ENCODE measurements at regions of chr3 and their contacts with region 1.

Region 1: DNA sequence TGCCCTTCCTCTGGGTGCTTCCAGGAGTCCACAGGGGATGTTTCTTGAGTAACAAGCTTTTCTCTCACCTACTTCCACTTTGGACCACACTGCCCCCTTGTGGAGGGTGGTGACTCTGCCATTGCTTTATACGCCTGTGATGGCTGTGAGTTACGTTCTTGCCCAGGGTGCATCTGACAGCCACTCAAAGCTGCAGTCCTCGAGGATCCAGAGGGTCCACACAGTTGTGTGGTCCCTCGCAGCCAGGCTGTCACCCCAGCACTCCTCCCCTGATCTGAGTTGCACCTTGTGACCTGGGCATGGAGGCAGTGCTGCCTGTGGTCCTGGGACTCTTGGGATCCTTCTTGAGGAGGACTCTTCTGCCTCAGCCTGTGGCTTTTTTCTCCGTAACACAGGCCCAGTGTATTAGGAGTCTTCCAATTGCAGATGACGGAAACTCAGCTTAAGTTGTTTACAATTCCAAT is 23.4 kb downstream of the FOXL2 start:
- DNase-seq: peak; percentile 73 to 79 (median 78)
- H3K4me3 ChIP-seq: no peak overlapping the region
- H3K4me3 Mint-ChIP-seq: peak overlapping the region in 1 of 8 donors; percentile 53
- H3K27ac ChIP-seq: no peak overlapping the region
- H3K27ac Mint-ChIP-seq: peak overlapping the region in 1 of 7 donors; percentile 7
- H3K4me1 ChIP-seq: no peaks in the 10 kb centered on the region
- H3K4me1 Mint-ChIP-seq: peaks cover 0 to 1% (median under 1%) of the 10 kb centered on the region in 4 donors
- H3K27me3 ChIP-seq: peaks cover 3% of the 10 kb centered on the region
- H3K27me3 Mint-ChIP-seq: peaks cover 4 to 11% of the 10 kb centered on the region in 2 donors

Region 2: DNA sequence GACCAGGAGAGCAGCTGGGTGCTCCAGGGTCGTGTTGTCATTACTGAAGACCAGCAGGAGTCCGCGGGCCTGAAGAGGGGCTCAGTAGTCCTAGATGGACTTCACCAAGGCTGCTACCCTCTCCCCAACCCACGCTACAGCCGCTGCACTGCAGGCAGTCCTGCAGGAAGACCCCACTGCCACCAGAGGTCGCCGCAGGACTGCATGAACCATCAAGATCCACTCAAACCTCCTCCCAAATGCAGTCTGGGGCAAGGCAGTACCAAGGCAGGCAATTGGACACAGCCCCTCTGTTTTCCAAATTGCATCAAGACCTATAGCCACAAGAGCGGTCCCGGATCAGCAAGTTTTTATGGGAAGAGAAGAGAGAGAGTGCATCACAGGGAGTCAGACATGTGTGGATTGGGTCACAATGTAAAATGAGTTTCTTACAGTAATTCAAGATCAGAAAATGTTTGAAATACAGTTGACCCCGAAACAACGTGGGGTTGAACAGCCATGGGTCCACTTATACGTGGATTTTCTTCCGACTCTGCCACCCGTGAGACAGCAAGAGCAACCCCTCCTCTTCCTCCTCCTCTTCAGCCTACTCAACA is 854.9 kb before region 1 on chr3:
- CTCF ChIA-PET with region 1: interaction called, 8 read pairs
- POLR2A ChIA-PET with region 1: no interaction called
- intact Hi-C with region 1: loop called (anchors 2 kb)
- DNase-seq: peak; percentile 54 to 61 (median 59)
- H3K4me3 ChIP-seq: no peak overlapping the region
- H3K4me3 Mint-ChIP-seq: no peak overlapping the region
- H3K27ac ChIP-seq: no peak overlapping the region
- H3K27ac Mint-ChIP-seq: no peak overlapping the region
- H3K4me1 ChIP-seq: no peaks in the 10 kb centered on the region
- H3K4me1 Mint-ChIP-seq: no peaks in the 10 kb centered on the region
- H3K27me3 ChIP-seq: no peaks in the 10 kb centered on the region
- H3K27me3 Mint-ChIP-seq: peaks cover 7 to 16% of the 10 kb centered on the region in 2 donors

Region 3: GRCh38 chr3:138284957-138285477 is 638.5 kb before region 1 on chr3:
- CTCF ChIA-PET with region 1: no interaction called
- POLR2A ChIA-PET with region 1: no interaction called
- intact Hi-C with region 1: no loop called
- DNase-seq: no peak
- H3K4me3 ChIP-seq: no peak overlapping the region
- H3K4me3 Mint-ChIP-seq: no peak overlapping the region
- H3K27ac ChIP-seq: no peak overlapping the region
- H3K27ac Mint-ChIP-seq: no peak overlapping the region
- H3K4me1 ChIP-seq: no peaks in the 10 kb centered on the region
- H3K4me1 Mint-ChIP-seq: peaks cover 0 to 8% (median 3%) of the 10 kb centered on the region in 4 donors
- H3K27me3 ChIP-seq: no peaks in the 10 kb centered on the region
- H3K27me3 Mint-ChIP-seq: no peaks in the 10 kb centered on the region

Region 4: GRCh38 chr3:138417559-138417982 is 506.0 kb before region 1 on chr3:
- CTCF ChIA-PET with region 1: interaction called, 64 read pairs
- POLR2A ChIA-PET with region 1: no interaction called
- intact Hi-C with region 1: loop called (anchors 1 kb)
- DNase-seq: peak; percentile 38 to 52 (median 40)
- H3K4me3 ChIP-seq: no peak overlapping the region
- H3K4me3 Mint-ChIP-seq: no peak overlapping the region
- H3K27ac ChIP-seq: no peak overlapping the region
- H3K27ac Mint-ChIP-seq: no peak overlapping the region
- H3K4me1 ChIP-seq: no peaks in the 10 kb centered on the region
- H3K4me1 Mint-ChIP-seq: no peaks in the 10 kb centered on the region
- H3K27me3 ChIP-seq: no peaks in the 10 kb centered on the region
- H3K27me3 Mint-ChIP-seq: peaks cover 5 to 14% of the 10 kb centered on the region in 2 donors

Region 5: DNA sequence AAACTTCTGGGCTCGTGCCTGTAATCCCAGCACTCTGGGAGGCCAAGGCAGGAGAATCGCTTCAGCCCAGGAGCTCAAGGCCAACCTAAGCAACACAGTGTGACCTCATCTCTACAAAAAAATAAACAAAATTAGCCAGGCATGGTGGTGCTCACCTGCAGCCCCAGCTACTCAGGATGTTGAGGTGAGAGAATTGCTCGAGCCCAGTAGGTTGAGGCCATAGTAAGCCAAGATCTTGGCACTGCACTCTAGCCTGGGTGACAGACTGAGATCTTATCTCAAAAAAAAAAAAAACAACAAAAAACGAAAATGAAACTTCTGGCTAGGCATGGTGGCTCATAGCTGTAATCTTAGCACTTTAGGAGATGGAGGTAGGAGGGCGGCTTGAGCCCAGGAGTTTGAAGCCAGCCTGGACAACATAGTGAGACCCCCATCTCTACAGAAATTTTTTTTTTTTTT is 142.5 kb before region 1 on chr3:
- CTCF ChIA-PET with region 1: interaction called, 10 read pairs
- POLR2A ChIA-PET with region 1: no interaction called
- intact Hi-C with region 1: no loop called
- DNase-seq: peak; percentile 73 to 87 (median 83)
- H3K4me3 ChIP-seq: peak overlapping the region in 1 of 2 donors; percentile 22
- H3K4me3 Mint-ChIP-seq: peak overlapping the region; percentile 46 to 81 (median 70)
- H3K27ac ChIP-seq: peak overlapping the region; percentile 48
- H3K27ac Mint-ChIP-seq: peak overlapping the region; percentile 86 to 94 (median 92)
- H3K4me1 ChIP-seq: peaks cover 22% of the 10 kb centered on the region
- H3K4me1 Mint-ChIP-seq: peaks cover 20 to 46% (median 29%) of the 10 kb centered on the region in 4 donors
- H3K27me3 ChIP-seq: no peaks in the 10 kb centered on the region
- H3K27me3 Mint-ChIP-seq: no peaks in the 10 kb centered on the region

Region 6: GRCh38 chr3:138962854-138963560 is 39.4 kb after region 1 on chr3:
- CTCF ChIA-PET with region 1: no interaction called
- POLR2A ChIA-PET with region 1: no interaction called
- intact Hi-C with region 1: no loop called
- DNase-seq: no peak
- H3K4me3 ChIP-seq: no peak overlapping the region
- H3K4me3 Mint-ChIP-seq: no peak overlapping the region
- H3K27ac ChIP-seq: no peak overlapping the region
- H3K27ac Mint-ChIP-seq: no peak overlapping the region
- H3K4me1 ChIP-seq: peaks cover 10% of the 10 kb centered on the region
- H3K4me1 Mint-ChIP-seq: peaks cover 0 to 16% (median 6%) of the 10 kb centered on the region in 4 donors
- H3K27me3 ChIP-seq: peaks cover 13% of the 10 kb centered on the region
- H3K27me3 Mint-ChIP-seq: peaks cover 25 to 57% of the 10 kb centered on the region in 2 donors

Region 7: DNA sequence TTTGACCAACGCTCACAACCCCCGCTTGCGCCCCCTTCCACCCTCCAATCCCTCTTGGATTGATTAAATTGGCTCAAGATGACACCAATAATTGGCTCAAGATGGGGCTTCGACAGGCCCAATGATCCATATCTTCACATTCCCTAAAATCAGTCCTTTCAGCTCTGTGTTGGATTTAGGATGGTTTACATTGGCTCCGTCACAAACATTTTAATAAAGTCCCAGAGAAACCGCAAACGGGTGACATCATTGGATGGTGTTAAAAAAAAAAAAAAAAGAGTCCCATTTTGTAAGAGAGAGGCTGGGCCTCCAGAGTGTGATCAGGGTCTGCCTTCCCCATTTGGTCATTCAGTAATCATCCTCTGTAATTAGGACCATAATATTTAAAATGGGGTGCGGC is 306.8 kb after region 1 on chr3:
- CTCF ChIA-PET with region 1: no interaction called
- POLR2A ChIA-PET with region 1: no interaction called
- intact Hi-C with region 1: no loop called
- DNase-seq: no peak
- H3K4me3 ChIP-seq: no peak overlapping the region
- H3K4me3 Mint-ChIP-seq: no peak overlapping the region
- H3K27ac ChIP-seq: no peak overlapping the region
- H3K27ac Mint-ChIP-seq: no peak overlapping the region
- H3K4me1 ChIP-seq: no peaks in the 10 kb centered on the region
- H3K4me1 Mint-ChIP-seq: no peaks in the 10 kb centered on the region
- H3K27me3 ChIP-seq: no peaks in the 10 kb centered on the region
- H3K27me3 Mint-ChIP-seq: no peaks in the 10 kb centered on the region

Measured in CD4-positive, alpha-beta memory T cell (primary cell).